ENCODE measurements at regions of chr3 and their contacts with region 1.

Region 1: GRCh38 chr3:156948402-156949210 is 122.5 kb downstream of the LEKR1 start:
- DNase-seq: no peak
- ATAC-seq: no peak
- H3K4me3 ChIP-seq: no peak overlapping the region
- H3K27ac ChIP-seq: no peak overlapping the region
- H3K4me1 ChIP-seq: no peaks in the 10 kb centered on the region
- H3K27me3 ChIP-seq: no peaks in the 10 kb centered on the region
- CTCF ChIP-seq: no peak
- POLR2A ChIP-seq: no peak

Region 2: DNA sequence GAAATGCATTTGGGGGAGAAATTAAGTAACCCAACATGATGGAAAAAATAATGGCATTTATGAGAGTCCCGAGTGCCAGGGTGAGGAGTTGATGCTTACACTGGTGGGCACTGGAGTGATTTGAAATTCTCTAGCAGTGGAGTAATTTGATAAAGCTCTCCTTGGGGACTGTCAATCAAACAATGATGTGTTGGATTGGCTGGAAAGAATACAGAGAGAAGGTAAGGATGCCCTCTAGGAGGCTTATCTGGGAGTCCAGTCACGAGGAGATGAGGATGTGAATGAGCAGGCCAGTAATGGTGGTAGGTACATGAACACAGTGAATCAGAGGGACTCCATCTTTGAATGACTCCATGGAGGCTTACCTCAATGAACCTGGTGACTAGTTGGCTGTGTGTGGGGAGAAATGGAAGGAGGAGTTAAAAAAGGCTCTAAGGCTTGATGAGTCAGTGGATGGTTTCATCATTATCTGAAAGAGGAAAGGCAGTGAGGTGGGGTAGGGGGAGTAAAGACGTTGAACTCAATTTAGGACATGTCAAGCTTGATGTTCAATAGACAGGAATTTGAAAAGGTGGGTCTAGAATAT is 767.2 kb before region 1 on chr3:
- in situ Hi-C with region 1: no loop called
- intact Hi-C with region 1: no loop called
- DNase-seq: no peak
- ATAC-seq: no peak
- H3K4me3 ChIP-seq: no peak overlapping the region
- H3K27ac ChIP-seq: no peak overlapping the region
- H3K4me1 ChIP-seq: no peaks in the 10 kb centered on the region
- H3K27me3 ChIP-seq: no peaks in the 10 kb centered on the region
- CTCF ChIP-seq: no peak
- POLR2A ChIP-seq: no peak

Region 3: GRCh38 chr3:157130467-157131251 is 182.1 kb after region 1 on chr3:
- in situ Hi-C with region 1: no loop called
- intact Hi-C with region 1: loop called (anchors 10 kb)
- DNase-seq: peak; percentile 45 to 63
- ATAC-seq: peak; percentile 25 to 53
- H3K4me3 ChIP-seq: peak overlapping the region in 3 of 4 donors; percentile 25 to 34 (median 34)
- H3K27ac ChIP-seq: peak overlapping the region; percentile 70 to 86 (median 72)
- H3K4me1 ChIP-seq: peaks cover 53 to 78% of the 10 kb centered on the region in 2 donors
- H3K27me3 ChIP-seq: no peaks in the 10 kb centered on the region
- CTCF ChIP-seq: peak; percentile 48 to 73 (median 66)
- POLR2A ChIP-seq: peak in 1 of 2 donors; percentile 14

Region 4: DNA sequence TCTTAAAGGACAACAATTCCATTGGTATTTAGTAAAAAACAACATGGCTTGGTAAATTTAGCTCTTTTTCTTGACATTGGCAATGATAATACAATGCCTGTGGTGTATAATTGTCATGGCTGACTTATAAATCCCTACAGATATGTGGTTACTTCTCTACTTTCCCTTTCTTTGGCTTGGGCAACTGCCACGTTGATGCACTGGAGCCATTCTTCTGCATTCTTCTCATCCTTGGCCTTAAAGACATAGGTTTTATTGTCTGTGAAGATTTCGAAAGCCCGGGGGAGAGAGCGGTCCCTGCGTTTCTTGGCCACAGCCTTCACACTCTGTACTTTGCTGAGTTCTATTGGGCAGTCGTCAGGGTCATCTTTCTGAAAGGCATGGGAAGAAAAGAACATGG is 312.4 kb after region 1 on chr3:
- in situ Hi-C with region 1: no loop called
- intact Hi-C with region 1: no loop called
- DNase-seq: no peak
- ATAC-seq: no peak
- H3K4me3 ChIP-seq: no peak overlapping the region
- H3K27ac ChIP-seq: no peak overlapping the region
- H3K4me1 ChIP-seq: no peaks in the 10 kb centered on the region
- H3K27me3 ChIP-seq: no peaks in the 10 kb centered on the region
- CTCF ChIP-seq: no peak
- POLR2A ChIP-seq: no peak

Region 5: DNA sequence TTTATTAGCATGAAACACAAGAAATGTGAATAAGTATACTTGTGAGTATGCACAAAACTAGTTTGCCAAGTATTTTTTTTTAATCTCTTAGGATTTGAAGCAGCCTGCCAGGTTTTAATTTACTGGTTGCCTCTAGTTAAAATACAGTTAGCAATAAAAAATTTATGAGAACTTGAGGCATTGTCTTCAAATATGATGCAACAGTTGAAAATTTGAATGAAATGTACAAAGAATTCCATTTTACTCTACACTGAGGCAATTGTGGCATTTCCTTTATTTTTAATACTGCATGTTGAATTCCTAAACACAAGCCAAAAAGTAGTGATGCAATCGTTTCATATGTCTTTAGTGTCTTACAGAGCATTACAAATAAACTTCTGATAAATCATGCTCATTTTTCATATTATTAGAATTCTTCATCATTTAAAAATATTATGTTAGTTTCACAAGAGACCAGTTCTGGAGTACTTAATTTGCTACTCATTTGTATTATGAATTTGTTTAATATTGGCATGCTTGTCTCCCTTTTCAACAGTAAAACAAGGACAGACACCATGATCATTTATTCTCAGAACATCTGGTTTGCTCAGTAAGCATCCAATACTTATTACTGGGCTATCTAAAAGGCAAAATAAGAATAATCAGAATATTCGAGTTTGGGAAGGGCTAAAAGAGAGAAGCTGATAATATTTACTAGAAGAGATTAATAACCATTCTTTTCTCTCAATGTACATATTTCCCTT is 363.2 kb after region 1 on chr3:
- in situ Hi-C with region 1: no loop called
- intact Hi-C with region 1: no loop called
- DNase-seq: no peak
- ATAC-seq: no peak
- H3K4me3 ChIP-seq: no peak overlapping the region
- H3K27ac ChIP-seq: no peak overlapping the region
- H3K4me1 ChIP-seq: no peaks in the 10 kb centered on the region
- H3K27me3 ChIP-seq: no peaks in the 10 kb centered on the region
- CTCF ChIP-seq: no peak
- POLR2A ChIP-seq: no peak